ENCODE measurements at regions of chr6 and their contacts with region 1.

Region 1: GRCh38 chr6:36759148-36759759 is 61.6 kb downstream of the RAB44 start:
- DNase-seq: no peak
- ATAC-seq: peak; percentile 67
- H3K4me3 ChIP-seq: no peak overlapping the region
- H3K27ac ChIP-seq: no peak overlapping the region
- H3K4me1 ChIP-seq: peaks cover 40% of the 10 kb centered on the region
- H3K27me3 ChIP-seq: no peaks in the 10 kb centered on the region
- CTCF ChIP-seq: peak; percentile 98 to 100 (median 98); a peak in 5 of 6 replicates
- EP300 ChIP-seq: no peak
- POLR2A ChIP-seq: no peak
- RAD21 ChIP-seq: peak; percentile 94

Region 2: GRCh38 chr6:35833536-35833935 is 925.7 kb before region 1 on chr6:
- CTCF ChIA-PET with region 1: no interaction called
- POLR2A ChIA-PET with region 1: no interaction called
- RAD21 ChIA-PET with region 1: no interaction called
- SMC1A ChIA-PET with region 1: no interaction called
- in situ Hi-C with region 1: no loop called
- intact Hi-C with region 1: no loop called
- DNase-seq: no peak
- ATAC-seq: no peak
- H3K4me3 ChIP-seq: no peak overlapping the region
- H3K27ac ChIP-seq: no peak overlapping the region
- H3K4me1 ChIP-seq: no peaks in the 10 kb centered on the region
- H3K27me3 ChIP-seq: no peaks in the 10 kb centered on the region
- CTCF ChIP-seq: no peak
- EP300 ChIP-seq: no peak
- POLR2A ChIP-seq: no peak
- RAD21 ChIP-seq: no peak

Region 3: GRCh38 chr6:36599791-36600209 is 159.5 kb before region 1 on chr6:
- CTCF ChIA-PET with region 1: interaction called, 17 read pairs
- POLR2A ChIA-PET with region 1: interaction called, 5 read pairs
- RAD21 ChIA-PET with region 1: interaction called, 5 read pairs
- SMC1A ChIA-PET with region 1: interaction called, 5 read pairs
- in situ Hi-C with region 1: no loop called
- intact Hi-C with region 1: no loop called
- DNase-seq: no peak
- ATAC-seq: peak; percentile 84
- H3K4me3 ChIP-seq: peak overlapping the region; percentile 73
- H3K27ac ChIP-seq: no peak overlapping the region
- H3K4me1 ChIP-seq: peaks cover 3% of the 10 kb centered on the region; the same call in 1 of the 2 replicates
- H3K27me3 ChIP-seq: no peaks in the 10 kb centered on the region
- CTCF ChIP-seq: no peak
- EP300 ChIP-seq: no peak
- POLR2A ChIP-seq: peak; percentile 66
- RAD21 ChIP-seq: no peak

Region 4: GRCh38 chr6:36615018-36615761 is 144.1 kb before region 1 on chr6:
- CTCF ChIA-PET with region 1: interaction called, 121 read pairs
- POLR2A ChIA-PET with region 1: interaction called, 5 read pairs
- RAD21 ChIA-PET with region 1: interaction called, 95 read pairs
- SMC1A ChIA-PET with region 1: interaction called, 111 read pairs
- in situ Hi-C with region 1: loop called (anchors 5 kb)
- intact Hi-C with region 1: loop called (anchors 1 kb)
- DNase-seq: no peak
- ATAC-seq: peak; percentile 69
- H3K4me3 ChIP-seq: no peak overlapping the region
- H3K27ac ChIP-seq: no peak overlapping the region
- H3K4me1 ChIP-seq: peaks cover 6% of the 10 kb centered on the region
- H3K27me3 ChIP-seq: no peaks in the 10 kb centered on the region
- CTCF ChIP-seq: peak; percentile 74 to 84 (median 80)
- EP300 ChIP-seq: no peak
- POLR2A ChIP-seq: no peak
- RAD21 ChIP-seq: peak; percentile 97

Region 5: DNA sequence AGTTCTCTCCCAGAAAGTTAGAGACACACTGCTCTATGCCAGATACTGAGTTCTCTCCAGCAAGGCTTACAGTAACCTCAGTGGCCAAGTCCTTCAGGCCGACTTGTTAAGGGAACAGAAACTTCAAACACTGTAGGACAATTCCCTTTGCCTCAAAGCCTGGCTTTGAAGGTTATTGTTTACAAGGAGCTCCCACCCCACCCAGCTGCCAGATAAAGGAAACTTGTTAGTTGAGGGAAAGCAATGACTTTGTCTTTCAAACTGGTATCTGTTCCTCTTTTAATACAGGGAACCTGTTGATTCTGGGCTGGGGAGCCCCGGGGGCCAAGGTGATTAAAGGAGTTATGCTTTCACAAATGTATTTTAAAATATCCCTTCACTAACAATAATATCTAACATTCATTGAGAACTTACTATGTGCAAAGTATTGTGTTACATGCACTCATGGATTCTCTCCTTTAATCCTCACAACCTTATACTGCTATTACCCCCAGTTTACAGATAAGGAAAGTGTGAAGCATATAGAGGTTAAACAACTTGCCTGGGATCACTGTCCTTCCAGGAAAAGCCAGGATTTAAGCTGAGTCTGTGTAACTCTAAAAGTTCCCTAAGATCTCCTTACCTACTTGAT is 108.3 kb before region 1 on chr6:
- CTCF ChIA-PET with region 1: interaction called, 9 read pairs
- POLR2A ChIA-PET with region 1: interaction called, 3 read pairs
- RAD21 ChIA-PET with region 1: interaction called, 3 read pairs
- SMC1A ChIA-PET with region 1: interaction called, 11 read pairs
- in situ Hi-C with region 1: no loop called
- intact Hi-C with region 1: no loop called
- DNase-seq: peak; percentile 69
- ATAC-seq: peak; percentile 95
- H3K4me3 ChIP-seq: no peak overlapping the region
- H3K27ac ChIP-seq: peak overlapping the region; percentile 52
- H3K4me1 ChIP-seq: peaks cover 42% of the 10 kb centered on the region
- H3K27me3 ChIP-seq: no peaks in the 10 kb centered on the region
- CTCF ChIP-seq: peak in 1 of 3 experiments; percentile 31; a peak in 1 of 6 replicates
- EP300 ChIP-seq: peak; percentile 59 to 90; a peak in 3 of 4 replicates
- POLR2A ChIP-seq: no peak
- RAD21 ChIP-seq: peak; percentile 34

Region 6: DNA sequence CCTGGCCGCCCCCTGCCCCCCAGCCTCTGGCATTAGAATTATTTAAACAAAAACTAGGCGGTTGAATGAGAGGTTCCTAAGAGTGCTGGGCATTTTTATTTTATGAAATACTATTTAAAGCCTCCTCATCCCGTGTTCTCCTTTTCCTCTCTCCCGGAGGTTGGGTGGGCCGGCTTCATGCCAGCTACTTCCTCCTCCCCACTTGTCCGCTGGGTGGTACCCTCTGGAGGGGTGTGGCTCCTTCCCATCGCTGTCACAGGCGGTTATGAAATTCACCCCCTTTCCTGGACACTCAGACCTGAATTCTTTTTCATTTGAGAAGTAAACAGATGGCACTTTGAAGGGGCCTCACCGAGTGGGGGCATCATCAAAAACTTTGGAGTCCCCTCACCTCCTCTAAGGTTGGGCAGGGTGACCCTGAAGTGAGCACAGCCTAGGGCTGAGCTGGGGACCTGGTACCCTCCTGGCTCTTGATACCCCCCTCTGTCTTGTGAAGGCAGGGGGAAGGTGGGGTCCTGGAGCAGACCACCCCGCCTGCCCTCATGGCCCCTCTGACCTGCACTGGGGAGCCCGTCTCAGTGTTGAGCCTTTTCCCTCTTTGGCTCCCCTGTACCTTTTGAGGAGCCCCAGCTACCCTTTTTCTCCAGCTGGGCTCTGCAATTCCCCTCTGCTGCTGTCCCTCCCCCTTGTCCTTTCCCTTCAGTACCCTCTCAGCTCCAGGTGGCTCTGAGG is 73.2 kb before region 1 on chr6:
- CTCF ChIA-PET with region 1: interaction called, 109 read pairs
- POLR2A ChIA-PET with region 1: interaction called, 57 read pairs
- RAD21 ChIA-PET with region 1: interaction called, 124 read pairs
- SMC1A ChIA-PET with region 1: interaction called, 120 read pairs
- in situ Hi-C with region 1: no loop called
- intact Hi-C with region 1: loop called (anchors 2 kb)
- DNase-seq: no peak
- ATAC-seq: no peak
- H3K4me3 ChIP-seq: no peak overlapping the region
- H3K27ac ChIP-seq: no peak overlapping the region
- H3K4me1 ChIP-seq: peaks cover 34% of the 10 kb centered on the region
- H3K27me3 ChIP-seq: no peaks in the 10 kb centered on the region
- CTCF ChIP-seq: no peak
- EP300 ChIP-seq: no peak
- POLR2A ChIP-seq: no peak
- RAD21 ChIP-seq: no peak

Region 7: DNA sequence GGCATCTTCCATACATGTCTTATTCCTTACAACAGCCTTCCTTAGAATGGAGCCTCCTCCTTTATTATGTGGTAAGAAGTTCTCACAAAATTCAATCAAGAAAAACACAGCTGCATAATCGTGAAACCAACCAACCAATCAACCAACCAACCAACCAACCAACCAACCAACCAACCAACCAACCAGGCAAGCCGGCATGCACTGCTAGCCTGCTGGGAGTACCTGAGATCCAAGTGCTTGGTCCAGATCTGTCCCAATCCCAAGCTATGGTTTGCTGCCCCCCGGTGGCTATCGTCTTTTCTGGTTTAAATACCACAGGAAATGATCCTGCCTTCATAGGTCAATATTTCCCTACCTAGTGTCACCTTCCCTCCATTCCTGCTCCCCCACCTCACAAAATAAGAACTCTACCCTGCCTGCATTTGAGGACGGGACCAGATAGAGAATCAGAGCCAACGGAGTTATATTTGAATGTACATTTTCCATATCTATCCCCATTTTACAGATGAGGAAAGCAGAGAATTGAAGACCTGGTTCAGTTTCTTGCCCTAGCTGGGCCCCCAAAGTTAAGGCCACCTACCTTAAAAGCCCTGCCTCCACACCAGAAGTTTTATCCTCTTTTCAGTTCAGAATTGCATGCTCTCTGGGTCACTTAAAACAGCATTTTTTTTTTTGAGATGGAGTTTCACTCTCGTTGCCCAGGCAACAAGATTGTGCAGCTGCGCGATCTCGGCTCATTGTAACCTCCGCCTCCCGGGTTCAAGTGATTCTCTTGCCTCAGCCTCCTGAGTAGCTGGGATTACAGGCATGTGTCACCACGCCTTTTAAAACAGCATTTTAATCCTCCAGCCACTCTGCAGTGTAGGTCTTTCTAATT is 34.5 kb before region 1 on chr6:
- CTCF ChIA-PET with region 1: interaction called, 61 read pairs
- POLR2A ChIA-PET with region 1: interaction called, 12 read pairs
- RAD21 ChIA-PET with region 1: interaction called, 22 read pairs
- SMC1A ChIA-PET with region 1: interaction called, 9 read pairs
- in situ Hi-C with region 1: no loop called
- intact Hi-C with region 1: no loop called
- DNase-seq: no peak
- ATAC-seq: peak; percentile 34
- H3K4me3 ChIP-seq: no peak overlapping the region
- H3K27ac ChIP-seq: 0 out of 2 replicates have a peak overlapping the region, but pooled peaks have one; percentile 9
- H3K4me1 ChIP-seq: peaks cover 36% of the 10 kb centered on the region
- H3K27me3 ChIP-seq: no peaks in the 10 kb centered on the region
- CTCF ChIP-seq: peak; percentile 43 to 69 (median 51)
- EP300 ChIP-seq: no peak
- POLR2A ChIP-seq: no peak
- RAD21 ChIP-seq: peak; percentile 69

Region 8: GRCh38 chr6:36780442-36781177 is 21.4 kb after region 1 on chr6:
- CTCF ChIA-PET with region 1: interaction called, 330 read pairs
- POLR2A ChIA-PET with region 1: interaction called, 3 read pairs
- RAD21 ChIA-PET with region 1: interaction called, 102 read pairs
- SMC1A ChIA-PET with region 1: interaction called, 120 read pairs
- in situ Hi-C with region 1: no loop called
- intact Hi-C with region 1: no loop called
- DNase-seq: no peak
- ATAC-seq: no peak
- H3K4me3 ChIP-seq: no peak overlapping the region
- H3K27ac ChIP-seq: no peak overlapping the region
- H3K4me1 ChIP-seq: peaks cover 21% of the 10 kb centered on the region
- H3K27me3 ChIP-seq: peaks cover 0 to 6% of the 10 kb centered on the region in 2 experiments; a peak in 1 of 4 replicates
- CTCF ChIP-seq: no peak
- EP300 ChIP-seq: no peak
- POLR2A ChIP-seq: no peak
- RAD21 ChIP-seq: no peak

Region 9: DNA sequence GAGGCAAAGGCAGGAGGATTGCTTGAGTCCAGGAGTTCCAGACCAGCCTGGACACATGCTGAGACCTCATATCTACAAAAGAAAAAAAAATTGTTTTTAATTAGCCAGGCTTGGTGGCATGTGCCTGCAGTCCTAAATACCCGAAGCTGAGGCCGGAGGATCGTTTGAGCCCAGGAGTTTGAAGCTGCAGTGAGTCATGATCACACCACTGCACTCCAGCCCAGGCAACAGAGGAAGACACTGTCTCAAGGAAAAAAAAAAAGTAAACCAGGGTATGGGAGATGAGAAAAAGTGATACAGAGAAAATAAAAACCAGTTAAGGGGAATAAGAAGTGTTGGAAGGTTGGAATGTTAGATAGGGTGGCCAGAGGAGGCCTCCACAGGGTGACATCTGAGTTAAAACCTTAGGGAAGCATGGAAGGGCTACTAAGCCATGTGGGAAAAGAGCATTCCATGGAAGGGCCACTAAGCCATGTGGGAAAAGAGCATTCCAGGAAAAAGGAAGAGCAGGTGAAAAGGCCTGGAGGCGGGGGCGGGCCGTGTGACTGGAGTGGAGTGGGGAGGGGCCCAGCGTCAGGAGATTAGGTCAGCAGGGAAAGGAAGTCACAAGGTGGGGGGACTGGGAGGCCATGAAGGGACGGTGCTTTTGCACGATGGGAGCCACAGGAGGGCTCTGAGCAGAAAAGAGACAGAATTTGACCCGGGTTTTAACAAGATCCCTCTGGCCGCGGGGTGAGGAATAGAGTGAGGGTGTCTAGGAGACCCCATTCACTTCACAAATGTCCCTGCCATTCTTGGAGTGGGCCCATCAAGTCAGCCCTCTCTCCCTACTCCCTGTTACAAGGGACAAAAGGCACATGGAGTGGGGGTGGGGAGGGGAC is 61.7 kb after region 1 on chr6:
- CTCF ChIA-PET with region 1: no interaction called
- POLR2A ChIA-PET with region 1: no interaction called
- RAD21 ChIA-PET with region 1: no interaction called
- SMC1A ChIA-PET with region 1: no interaction called
- in situ Hi-C with region 1: no loop called
- intact Hi-C with region 1: no loop called
- DNase-seq: no peak
- ATAC-seq: no peak
- H3K4me3 ChIP-seq: no peak overlapping the region
- H3K27ac ChIP-seq: no peak overlapping the region
- H3K4me1 ChIP-seq: no peaks in the 10 kb centered on the region
- H3K27me3 ChIP-seq: no peaks in the 10 kb centered on the region
- CTCF ChIP-seq: no peak
- EP300 ChIP-seq: no peak
- POLR2A ChIP-seq: no peak
- RAD21 ChIP-seq: no peak